ENCODE measurements at regions of chr5 and their contacts with region 1.

Region 1: DNA sequence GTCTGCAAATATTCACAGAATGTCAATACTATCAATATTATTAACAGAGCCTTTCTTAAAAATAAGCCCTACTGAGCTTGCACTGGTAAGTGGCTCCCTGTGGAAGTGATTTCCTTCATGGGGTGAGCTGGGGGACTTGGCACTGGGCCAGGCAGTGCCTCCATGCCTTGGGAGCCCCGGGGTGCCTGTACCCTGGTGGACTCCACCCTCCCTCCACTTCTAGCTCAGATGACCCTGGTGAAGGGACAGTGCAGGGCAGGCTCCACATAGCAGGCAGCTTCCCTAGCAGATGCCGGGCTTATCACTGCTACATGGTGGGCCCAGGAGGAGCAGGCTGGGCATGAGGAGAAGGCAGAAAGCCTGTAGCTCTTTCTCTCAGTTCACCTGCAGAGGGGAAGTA is 119.2 kb downstream of the DCP2 start:
- DNase-seq: no peak
- CTCF ChIP-seq: no peak

Region 2: GRCh38 chr5:113084402-113085083 is 11.3 kb before region 1 on chr5:
- CTCF ChIA-PET with region 1: interaction called, 13 read pairs
- POLR2A ChIA-PET with region 1: no interaction called
- DNase-seq: no peak
- CTCF ChIP-seq: no peak

Measured in GM10248 (cell line).